ENCODE measurements at regions of chr3 and their contacts with region 1.

Region 1: DNA sequence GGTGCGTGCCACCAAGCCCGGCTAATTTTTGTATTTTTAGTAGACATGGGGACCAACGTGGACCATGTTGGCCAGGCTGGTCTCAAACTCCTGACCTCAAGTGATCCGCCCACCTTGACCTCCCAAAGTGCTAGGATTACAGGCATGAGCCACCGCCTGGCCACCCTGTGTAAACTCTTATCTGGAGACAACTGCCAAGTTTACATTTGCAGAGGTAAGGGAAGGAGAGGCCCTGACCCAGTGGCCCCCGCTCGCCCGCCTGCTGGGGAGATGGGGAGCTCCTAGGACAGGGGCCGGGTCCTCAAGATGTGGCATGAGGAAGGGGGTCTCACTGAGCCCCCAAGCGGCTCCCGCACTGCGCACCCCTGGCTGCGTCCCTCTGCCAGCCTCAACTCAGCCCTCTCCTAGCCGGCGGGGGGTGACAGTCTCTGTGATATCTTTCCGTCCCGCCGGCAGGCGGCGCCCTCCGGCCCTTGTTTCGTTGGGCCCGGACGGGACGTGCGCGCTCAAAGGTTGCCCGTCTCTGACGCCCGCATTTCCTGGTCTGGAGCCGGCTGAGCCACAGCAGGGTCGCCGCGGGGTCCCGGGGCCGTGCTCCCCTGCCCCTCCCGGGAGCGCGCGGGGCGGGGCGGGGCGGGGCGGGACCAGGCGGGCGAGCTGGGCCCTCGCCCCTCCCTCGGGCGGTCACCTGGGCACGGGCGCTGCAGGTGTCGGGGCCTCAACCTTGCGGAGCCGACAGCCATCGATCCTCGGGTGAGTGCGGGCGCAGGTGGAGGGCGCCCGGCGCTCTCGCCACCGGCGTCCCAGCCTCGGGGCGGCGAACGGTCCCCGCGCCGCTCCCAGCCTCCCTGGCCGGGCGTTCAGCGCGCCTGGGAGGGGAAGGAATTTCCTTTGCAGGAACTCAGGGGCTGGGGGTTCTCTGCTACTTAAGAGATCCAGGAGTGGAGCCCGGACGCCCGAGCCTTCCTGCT is at the start of gene GPR160:
- DNase-seq: peak; percentile 73 to 89
- H3K4me3 ChIP-seq: peak within 1 kb of the TSS; percentile 79
- H3K27ac ChIP-seq: no peak within 1 kb of the TSS
- H3K4me1 ChIP-seq: peaks cover 9% of the 10 kb centered on the region
- H3K27me3 ChIP-seq: no peaks in the 10 kb centered on the region
- CTCF ChIP-seq: peak; percentile 98
- total RNA-seq, gene GPR160: 11.1 and 12.6 TPM in 2 replicates

Region 2: DNA sequence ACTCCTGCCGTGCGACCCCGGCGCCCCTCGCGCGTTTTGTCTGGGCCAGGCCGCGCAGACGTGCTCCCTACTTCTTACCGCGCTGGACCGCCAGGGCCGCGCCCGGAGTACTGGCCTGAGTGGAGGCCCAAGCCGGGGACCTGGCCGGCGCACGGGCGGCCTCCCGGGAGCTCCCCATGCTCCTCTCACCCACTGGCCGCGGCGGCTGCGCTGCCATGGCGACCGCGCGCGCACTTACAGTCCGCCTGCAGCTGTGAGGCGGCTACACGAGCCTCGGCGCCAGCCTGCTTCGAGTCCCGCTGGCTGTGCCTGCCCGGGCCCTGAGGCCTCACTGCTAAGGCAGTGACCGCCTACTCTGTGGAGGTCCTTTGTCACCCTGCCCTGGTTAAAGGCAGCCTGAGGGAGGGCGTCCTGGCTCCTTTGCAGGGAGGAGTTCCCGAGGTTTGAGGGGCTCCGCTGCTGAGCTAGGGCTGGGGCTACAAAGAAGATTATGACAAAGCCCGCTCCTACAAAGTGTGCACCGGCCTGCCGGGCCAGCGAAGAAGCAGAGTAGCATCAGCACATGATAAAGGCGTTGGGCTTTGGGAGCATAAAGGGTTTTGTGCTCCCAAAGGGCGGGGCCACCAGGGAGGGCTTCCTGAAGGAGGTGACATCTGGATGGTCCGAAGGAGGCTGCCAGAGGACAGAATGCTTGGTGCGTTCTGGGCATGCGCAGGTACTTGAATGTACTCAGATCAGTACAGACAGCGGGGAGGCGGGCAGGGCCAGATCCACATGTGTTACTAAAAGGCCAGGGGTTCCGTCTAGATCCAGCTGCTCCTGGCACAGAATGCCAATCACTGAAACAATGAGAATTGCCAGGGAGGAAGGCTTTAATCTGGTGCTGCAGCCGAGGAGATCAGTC is 225.2 kb before region 1 on chr3 and contains the starts of genes LRRC34 and LRRIQ4:
- CTCF ChIA-PET with region 1: no interaction called
- POLR2A ChIA-PET with region 1: no interaction called
- intact Hi-C with region 1: loop called (anchors 1 kb)
- DNase-seq: peak; percentile 57 to 74
- H3K4me3 ChIP-seq: peak within 1 kb of the TSS; percentile 61
- H3K27ac ChIP-seq: no peak within 1 kb of the TSS
- H3K4me1 ChIP-seq: peaks cover 16% of the 10 kb centered on the region
- H3K27me3 ChIP-seq: no peaks in the 10 kb centered on the region
- CTCF ChIP-seq: 0 out of 2 replicates have a peak, but pooled peaks have one; percentile 6
- total RNA-seq, gene LRRC34: 9.6 and 10.3 TPM in 2 replicates
- total RNA-seq, gene LRRIQ4: 1.3 TPM in 2 replicates

Region 3: GRCh38 chr3:169886671-169887070 is 151.1 kb before region 1 on chr3:
- CTCF ChIA-PET with region 1: no interaction called
- POLR2A ChIA-PET with region 1: no interaction called
- intact Hi-C with region 1: no loop called
- DNase-seq: no peak
- H3K4me3 ChIP-seq: no peak overlapping the region
- H3K27ac ChIP-seq: no peak overlapping the region
- H3K4me1 ChIP-seq: no peaks in the 10 kb centered on the region
- H3K27me3 ChIP-seq: no peaks in the 10 kb centered on the region
- CTCF ChIP-seq: no peak

Region 4: DNA sequence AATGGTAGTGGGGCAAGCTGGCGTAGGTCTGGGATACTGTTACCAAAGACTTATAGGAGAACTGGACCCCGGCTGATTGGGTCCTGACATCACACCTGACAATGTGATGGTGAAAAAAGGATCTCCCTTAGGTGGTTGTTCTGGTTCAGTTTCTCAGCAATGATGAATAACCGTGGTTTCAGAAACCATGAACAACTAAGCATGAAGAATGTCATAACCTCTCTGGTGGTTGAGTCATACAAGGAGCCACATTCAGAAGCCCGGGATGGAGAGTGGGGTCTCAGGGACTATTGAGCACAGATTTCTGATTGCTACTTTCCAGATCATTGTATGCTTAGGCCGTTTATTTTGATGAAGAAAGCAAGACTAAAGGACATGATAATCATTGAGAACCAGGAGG is 17.5 kb after region 1 on chr3:
- CTCF ChIA-PET with region 1: interaction called, 4 read pairs
- POLR2A ChIA-PET with region 1: no interaction called
- intact Hi-C with region 1: loop called (anchors 2 kb)
- DNase-seq: peak in 1 of 2 experiments; percentile 48
- H3K4me3 ChIP-seq: no peak overlapping the region
- H3K27ac ChIP-seq: no peak overlapping the region
- H3K4me1 ChIP-seq: peaks cover 27% of the 10 kb centered on the region
- H3K27me3 ChIP-seq: no peaks in the 10 kb centered on the region
- CTCF ChIP-seq: no peak

Region 5: DNA sequence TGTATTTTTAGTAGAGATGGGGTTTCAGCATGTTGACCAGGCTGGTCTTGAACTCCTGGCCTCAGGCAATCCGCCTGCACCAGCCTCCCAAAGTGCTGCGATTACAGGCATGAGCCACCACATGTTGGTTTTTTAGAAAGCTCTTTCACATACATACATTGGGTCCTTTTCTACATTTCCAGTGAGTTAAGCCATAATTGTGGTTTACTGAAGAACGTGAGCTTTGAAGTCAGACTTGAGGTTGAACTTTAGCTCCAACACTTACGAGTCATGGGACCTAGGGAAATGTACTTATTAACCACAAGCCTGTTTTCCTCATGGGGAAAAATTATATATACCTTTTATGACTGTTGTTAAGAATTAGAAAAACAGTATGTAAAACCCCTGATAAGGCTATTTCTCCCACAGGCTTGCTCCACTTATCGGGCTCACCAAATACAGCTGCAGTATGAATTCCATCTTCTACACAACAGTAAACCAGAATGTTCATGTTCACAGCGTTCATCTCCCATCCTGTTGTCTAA is 39.0 kb after region 1 on chr3:
- CTCF ChIA-PET with region 1: no interaction called
- POLR2A ChIA-PET with region 1: no interaction called
- intact Hi-C with region 1: loop called (anchors 5 kb)
- DNase-seq: no peak
- H3K4me3 ChIP-seq: no peak overlapping the region
- H3K27ac ChIP-seq: no peak overlapping the region
- H3K4me1 ChIP-seq: 0 out of 2 replicates have a peak, but pooled peaks cover 4% of the 10 kb centered on the region
- H3K27me3 ChIP-seq: no peaks in the 10 kb centered on the region
- CTCF ChIP-seq: no peak

Region 6: DNA sequence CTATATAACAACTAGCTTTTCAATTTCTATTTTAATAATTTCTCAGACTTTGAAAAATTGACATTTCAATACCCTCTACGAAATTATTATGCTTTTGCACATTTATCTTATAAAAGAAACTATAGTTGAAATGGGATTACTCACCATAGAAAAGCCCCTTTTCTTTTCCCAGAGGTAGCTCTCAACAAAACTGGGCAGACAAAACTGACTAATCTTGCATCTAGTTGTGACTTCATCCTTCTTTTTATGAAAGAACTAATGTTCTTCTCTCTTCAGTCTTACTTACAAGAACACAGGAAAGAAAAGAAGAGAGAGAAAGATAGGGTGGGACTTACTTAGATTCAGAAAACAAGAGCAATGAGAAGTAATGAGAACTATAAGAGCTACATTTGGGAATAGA is 61.0 kb after region 1 on chr3:
- CTCF ChIA-PET with region 1: no interaction called
- POLR2A ChIA-PET with region 1: interaction called, 3 read pairs
- intact Hi-C with region 1: loop called (anchors 5 kb)
- DNase-seq: no peak
- H3K4me3 ChIP-seq: no peak overlapping the region
- H3K27ac ChIP-seq: no peak overlapping the region
- H3K4me1 ChIP-seq: no peaks in the 10 kb centered on the region
- H3K27me3 ChIP-seq: no peaks in the 10 kb centered on the region
- CTCF ChIP-seq: no peak

Region 7: DNA sequence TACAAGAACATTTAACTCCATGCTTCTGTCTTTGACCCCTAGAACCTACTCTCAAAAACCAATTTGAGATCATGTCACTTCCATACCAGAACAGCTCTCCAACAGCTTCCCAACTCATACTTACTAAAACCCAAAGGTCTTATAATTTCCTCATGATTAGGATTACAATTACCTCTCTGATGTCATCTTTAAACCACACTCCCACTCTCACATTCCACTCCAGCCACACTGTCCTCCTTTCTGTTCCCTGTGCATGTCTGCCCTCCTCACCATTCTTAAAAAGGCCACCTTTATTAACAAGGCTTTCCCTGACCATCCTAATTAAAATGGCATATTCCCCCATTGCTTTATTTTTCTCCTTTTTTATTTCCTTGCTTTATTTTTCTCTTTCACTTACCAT is 124.9 kb after region 1 on chr3:
- CTCF ChIA-PET with region 1: no interaction called
- POLR2A ChIA-PET with region 1: no interaction called
- intact Hi-C with region 1: no loop called
- DNase-seq: no peak
- H3K4me3 ChIP-seq: no peak overlapping the region
- H3K27ac ChIP-seq: no peak overlapping the region
- H3K4me1 ChIP-seq: no peaks in the 10 kb centered on the region
- H3K27me3 ChIP-seq: no peaks in the 10 kb centered on the region
- CTCF ChIP-seq: no peak